Posterior vena cava (tissue), 2 donors: ENCODE measurements at regions of chr10 and their contacts with region 1.

Region 1: GRCh38 chr10:72511459-72511858 is 114.4 kb downstream of the MICU1 start:
- DNase-seq: no peak

Region 2: DNA sequence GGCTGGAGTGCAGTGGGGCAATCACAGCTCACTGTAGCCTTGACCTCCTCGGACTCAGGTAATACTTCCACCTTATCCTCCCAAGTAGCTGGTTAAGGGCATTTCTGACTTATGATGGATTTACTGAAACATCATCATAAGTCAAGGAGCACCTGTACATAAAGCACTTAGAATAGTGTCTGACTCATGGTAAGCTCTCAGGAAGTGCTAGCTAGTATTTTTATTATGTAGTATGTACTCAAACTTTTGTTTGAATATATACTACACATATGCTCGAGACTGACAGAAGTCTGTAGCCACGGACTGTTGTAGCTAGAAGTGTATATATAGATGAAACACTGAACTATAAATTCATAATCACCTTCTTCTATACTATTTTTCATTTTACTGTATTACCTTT is 49.2 kb before region 1 on chr10:
- intact Hi-C with region 1: loop called in 1 of 2 experiments (anchors 1 kb)
- DNase-seq: no peak

Region 3: GRCh38 chr10:72499701-72500100 is 11.8 kb before region 1 on chr10:
- intact Hi-C with region 1: no loop called
- DNase-seq: no peak

Region 4: GRCh38 chr10:72588266-72588665 is 76.8 kb after region 1 on chr10:
- intact Hi-C with region 1: no loop called
- DNase-seq: no peak

Region 5: DNA sequence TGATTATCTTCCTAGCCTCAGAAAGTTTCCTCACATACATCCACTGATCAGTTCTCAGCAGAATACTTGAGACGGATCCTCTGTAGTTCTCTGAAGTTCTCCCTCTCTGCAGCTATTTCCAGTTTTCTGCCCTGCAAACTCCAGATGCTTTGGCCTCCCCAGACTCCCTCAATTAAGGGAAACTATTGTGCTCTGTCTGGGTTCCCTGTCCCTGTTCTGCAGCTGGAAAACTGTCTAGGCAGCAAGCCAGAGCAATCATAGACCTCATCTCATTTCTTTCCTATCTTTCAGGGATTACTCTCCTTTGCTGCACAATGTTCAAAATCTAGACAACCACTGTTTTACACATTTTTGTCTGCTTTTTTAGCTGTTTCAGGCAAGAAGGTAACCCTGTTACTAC is 105.3 kb after region 1 on chr10:
- intact Hi-C with region 1: no loop called
- DNase-seq: no peak